ENCODE measurements at regions of chr20 and their contacts with region 1.

Region 1: DNA sequence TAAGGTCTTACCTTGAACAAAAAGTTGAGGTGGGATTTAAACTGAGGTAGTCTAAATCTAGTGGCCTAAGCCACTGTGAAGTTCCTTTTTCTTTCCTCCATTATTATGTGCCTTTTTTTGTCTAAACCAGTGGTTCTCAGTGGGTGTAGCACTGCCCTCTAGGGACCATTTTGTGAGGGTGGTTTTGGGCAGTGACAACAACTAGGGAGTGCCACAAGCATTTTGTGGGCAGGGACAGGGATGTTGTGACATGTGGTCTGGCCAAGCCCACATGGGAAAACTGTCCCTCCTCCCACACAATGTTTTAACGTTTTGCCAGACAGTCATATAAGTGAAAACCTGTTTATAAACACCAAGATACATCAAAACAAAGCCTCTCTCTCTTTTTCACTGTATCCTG is 899.4 kb upstream of the FLRT3 start:
- DNase-seq: peak; percentile 57 to 64
- H3K4me3 ChIP-seq: no peak overlapping the region
- H3K4me3 Mint-ChIP-seq: no peak overlapping the region
- H3K27ac Mint-ChIP-seq: no peak overlapping the region
- H3K4me1 ChIP-seq: no peaks in the 10 kb centered on the region
- H3K4me1 Mint-ChIP-seq: peaks cover 7% of the 10 kb centered on the region
- H3K27me3 ChIP-seq: no peaks in the 10 kb centered on the region
- H3K27me3 Mint-ChIP-seq: no peaks in the 10 kb centered on the region
- CTCF ChIP-seq: peak; percentile 42 to 51

Region 2: DNA sequence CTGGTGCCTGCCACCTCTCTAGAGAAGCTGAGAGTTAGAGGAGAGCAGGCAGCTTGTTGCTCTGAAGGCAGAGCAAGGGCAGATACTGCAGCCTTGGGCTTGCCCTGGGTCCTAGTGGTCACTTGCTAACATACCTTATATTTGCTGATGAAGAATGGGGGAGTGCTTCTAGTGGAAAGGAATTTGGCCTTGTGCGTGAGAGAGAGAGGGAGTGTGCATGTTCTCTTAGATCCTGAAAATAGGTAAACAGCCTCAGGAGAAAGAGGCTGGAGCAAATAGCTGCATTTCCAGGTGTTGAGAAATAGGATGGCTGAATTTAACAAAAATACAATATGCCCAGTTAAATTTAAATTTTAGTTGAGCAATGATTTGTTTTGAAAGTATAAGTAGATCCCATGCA is 174.9 kb before region 1 on chr20:
- CTCF ChIA-PET with region 1: no interaction called
- POLR2A ChIA-PET with region 1: no interaction called
- intact Hi-C with region 1: loop called (anchors 10 kb)
- DNase-seq: peak; percentile 56 to 65
- H3K4me3 ChIP-seq: no peak overlapping the region
- H3K4me3 Mint-ChIP-seq: no peak overlapping the region
- H3K27ac Mint-ChIP-seq: no peak overlapping the region
- H3K4me1 ChIP-seq: peaks cover 25% of the 10 kb centered on the region; the same call in 1 of the 2 replicates
- H3K4me1 Mint-ChIP-seq: peaks cover 21% of the 10 kb centered on the region
- H3K27me3 ChIP-seq: no peaks in the 10 kb centered on the region
- H3K27me3 Mint-ChIP-seq: no peaks in the 10 kb centered on the region
- CTCF ChIP-seq: peak in 1 of 2 experiments; percentile 12

Measured in Caco-2 (cell line).